Activated CD8-positive, alpha-beta T cell treated with anti-CD3 and anti-CD28 coated beads, Interleukin-2, amount 10 ng/mL, durations not matched to agents 7 days and 5 days (primary cell): ENCODE measurements at regions of chr1 and their contacts with region 1.

Region 1: GRCh38 chr1:234499119-234499942 is 20.4 kb upstream of the TARBP1 start:
- DNase-seq: peak; percentile 88
- ATAC-seq: peak; percentile 98
- H3K4me3 Mint-ChIP-seq: no peak overlapping the region
- H3K27ac Mint-ChIP-seq: peak overlapping the region; percentile 77
- H3K4me1 Mint-ChIP-seq: peaks cover 41% of the 10 kb centered on the region
- H3K27me3 Mint-ChIP-seq: peaks cover 2% of the 10 kb centered on the region

Region 2: GRCh38 chr1:234348964-234349363 is 150.4 kb before region 1 on chr1:
- CTCF ChIA-PET with region 1: no interaction called
- POLR2A ChIA-PET with region 1: no interaction called
- DNase-seq: no peak
- ATAC-seq: no peak
- H3K4me3 Mint-ChIP-seq: no peak overlapping the region
- H3K27ac Mint-ChIP-seq: no peak overlapping the region
- H3K4me1 Mint-ChIP-seq: no peaks in the 10 kb centered on the region
- H3K27me3 Mint-ChIP-seq: peaks cover 18% of the 10 kb centered on the region

Region 3: GRCh38 chr1:234519506-234519905 is 20.2 kb after region 1 on chr1:
- CTCF ChIA-PET with region 1: interaction called, 10 read pairs
- POLR2A ChIA-PET with region 1: interaction called, 3 read pairs
- DNase-seq: no peak
- ATAC-seq: no peak
- H3K4me3 Mint-ChIP-seq: no peak overlapping the region
- H3K27ac Mint-ChIP-seq: no peak overlapping the region
- H3K4me1 Mint-ChIP-seq: peaks cover 35% of the 10 kb centered on the region
- H3K27me3 Mint-ChIP-seq: no peaks in the 10 kb centered on the region

Region 4: GRCh38 chr1:234599617-234600417 is 100.5 kb after region 1 on chr1:
- CTCF ChIA-PET with region 1: interaction called, 32 read pairs
- POLR2A ChIA-PET with region 1: interaction called, 9 read pairs
- DNase-seq: peak; percentile 81
- ATAC-seq: peak; percentile 72
- H3K4me3 Mint-ChIP-seq: peak overlapping the region; percentile 85
- H3K27ac Mint-ChIP-seq: peak overlapping the region; percentile 95
- H3K4me1 Mint-ChIP-seq: peaks cover 57% of the 10 kb centered on the region
- H3K27me3 Mint-ChIP-seq: no peaks in the 10 kb centered on the region

Region 5: DNA sequence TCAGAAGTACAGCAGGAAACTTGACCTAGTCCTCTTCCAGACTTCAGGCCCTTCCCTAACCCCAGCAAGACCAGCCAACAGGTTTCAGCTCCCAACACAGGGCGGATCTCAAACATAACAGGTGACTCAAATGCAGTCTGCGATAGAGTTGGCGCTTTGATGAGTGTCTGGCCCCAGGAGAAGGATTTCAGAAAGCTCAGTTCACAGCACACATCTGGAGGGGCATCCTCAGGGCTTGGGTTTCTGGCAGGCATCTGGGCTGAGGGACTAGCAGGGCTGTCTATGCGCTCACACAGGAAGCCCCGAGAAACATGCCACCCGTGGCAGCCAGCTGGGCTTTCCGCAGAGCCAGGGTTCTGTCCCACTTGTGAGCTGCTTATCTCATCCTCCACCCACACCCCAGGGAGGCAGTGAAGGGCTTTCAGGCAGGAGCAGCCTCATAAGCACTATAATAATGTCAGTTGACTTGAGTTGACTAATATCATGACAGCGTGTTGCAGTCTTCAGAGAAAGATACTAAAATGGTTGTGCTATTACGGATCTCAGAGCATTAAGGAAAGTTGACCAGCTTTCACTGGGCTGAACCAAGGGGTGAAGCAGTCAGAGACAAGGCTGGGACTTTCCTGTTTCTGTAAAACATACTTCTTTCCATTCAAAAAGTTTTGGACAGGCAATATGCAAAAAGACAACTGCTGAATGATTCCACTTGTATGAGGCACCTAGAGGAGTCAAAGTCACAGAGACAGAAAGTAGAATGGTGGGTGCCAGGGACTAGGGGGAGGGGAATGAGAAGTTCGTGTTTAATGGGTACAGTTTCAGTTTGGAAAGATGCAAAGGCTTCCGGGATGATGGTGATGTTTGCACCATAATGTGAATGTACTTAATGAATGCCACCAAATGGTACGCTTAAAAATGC is 343.7 kb after region 1 on chr1:
- CTCF ChIA-PET with region 1: interaction called, 10 read pairs
- POLR2A ChIA-PET with region 1: no interaction called
- DNase-seq: peak; percentile 67
- ATAC-seq: peak; percentile 58
- H3K4me3 Mint-ChIP-seq: peak overlapping the region; percentile 47
- H3K27ac Mint-ChIP-seq: peak overlapping the region; percentile 89
- H3K4me1 Mint-ChIP-seq: peaks cover 85% of the 10 kb centered on the region
- H3K27me3 Mint-ChIP-seq: no peaks in the 10 kb centered on the region